ENCODE measurements at regions of chr13 and their contacts with region 1.

Region 1: GRCh38 chr13:99063952-99064351 is 86.1 kb upstream of the DOCK9 start:
- DNase-seq: no peak
- ATAC-seq: peak; percentile 52
- H3K4me3 Mint-ChIP-seq: no peak overlapping the region
- H3K27ac Mint-ChIP-seq: peak overlapping the region; percentile 47
- H3K4me1 Mint-ChIP-seq: peaks cover 50% of the 10 kb centered on the region
- H3K27me3 Mint-ChIP-seq: no peaks in the 10 kb centered on the region

Region 2: GRCh38 chr13:99053636-99054233 is 10.2 kb before region 1 on chr13:
- CTCF ChIA-PET with region 1: interaction called, 14 read pairs
- DNase-seq: peak; percentile 47
- ATAC-seq: peak; percentile 55
- H3K4me3 Mint-ChIP-seq: no peak overlapping the region
- H3K27ac Mint-ChIP-seq: peak overlapping the region; percentile 71
- H3K4me1 Mint-ChIP-seq: peaks cover 59% of the 10 kb centered on the region
- H3K27me3 Mint-ChIP-seq: no peaks in the 10 kb centered on the region

Region 3: DNA sequence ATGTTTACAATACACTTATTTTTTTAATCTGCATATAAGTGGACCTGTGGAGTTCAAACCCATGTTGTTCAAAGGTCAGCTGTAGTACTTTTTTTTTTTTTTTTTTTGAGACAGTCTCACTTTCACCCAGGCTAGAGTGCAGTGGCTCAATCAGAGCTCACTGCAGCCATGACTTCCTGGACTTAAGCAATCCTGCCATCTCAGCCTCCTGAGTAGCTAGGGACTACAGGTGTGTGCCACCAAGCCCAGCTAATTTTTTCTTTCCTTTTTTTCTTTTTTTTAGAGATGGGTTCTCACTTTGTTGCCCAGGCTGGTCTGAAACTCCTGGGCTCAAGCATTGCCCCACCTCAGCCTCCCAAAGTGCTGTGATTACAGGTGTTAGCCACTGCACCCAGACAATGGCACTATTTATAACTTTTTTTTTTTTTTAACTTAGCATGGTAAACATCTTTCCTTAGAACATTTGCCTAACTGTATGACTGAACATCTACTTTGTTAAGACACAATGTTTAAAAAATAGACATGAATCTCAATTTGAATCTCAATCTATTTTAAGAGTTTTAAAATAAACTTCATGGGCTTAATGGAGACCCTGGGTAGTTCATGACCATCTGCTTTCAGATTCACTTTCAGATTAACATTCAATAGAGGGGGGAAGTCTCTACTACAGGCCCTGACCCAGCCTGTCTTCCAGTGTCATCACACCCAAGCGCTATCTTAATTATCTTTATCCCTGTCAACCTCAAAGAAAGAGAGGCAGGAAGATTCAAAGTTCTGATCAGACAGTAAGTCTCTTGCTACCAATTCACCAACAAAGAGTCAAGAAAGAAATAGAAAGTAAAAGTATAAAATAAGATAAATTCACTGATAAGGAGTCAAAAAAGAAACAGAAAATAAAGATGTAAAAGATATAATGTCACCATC is 11.6 kb after region 1 on chr13:
- CTCF ChIA-PET with region 1: no interaction called
- DNase-seq: peak; percentile 52
- ATAC-seq: peak; percentile 91
- H3K4me3 Mint-ChIP-seq: peak overlapping the region; percentile 48
- H3K27ac Mint-ChIP-seq: peak overlapping the region; percentile 93
- H3K4me1 Mint-ChIP-seq: peaks cover 66% of the 10 kb centered on the region
- H3K27me3 Mint-ChIP-seq: no peaks in the 10 kb centered on the region

Region 4: DNA sequence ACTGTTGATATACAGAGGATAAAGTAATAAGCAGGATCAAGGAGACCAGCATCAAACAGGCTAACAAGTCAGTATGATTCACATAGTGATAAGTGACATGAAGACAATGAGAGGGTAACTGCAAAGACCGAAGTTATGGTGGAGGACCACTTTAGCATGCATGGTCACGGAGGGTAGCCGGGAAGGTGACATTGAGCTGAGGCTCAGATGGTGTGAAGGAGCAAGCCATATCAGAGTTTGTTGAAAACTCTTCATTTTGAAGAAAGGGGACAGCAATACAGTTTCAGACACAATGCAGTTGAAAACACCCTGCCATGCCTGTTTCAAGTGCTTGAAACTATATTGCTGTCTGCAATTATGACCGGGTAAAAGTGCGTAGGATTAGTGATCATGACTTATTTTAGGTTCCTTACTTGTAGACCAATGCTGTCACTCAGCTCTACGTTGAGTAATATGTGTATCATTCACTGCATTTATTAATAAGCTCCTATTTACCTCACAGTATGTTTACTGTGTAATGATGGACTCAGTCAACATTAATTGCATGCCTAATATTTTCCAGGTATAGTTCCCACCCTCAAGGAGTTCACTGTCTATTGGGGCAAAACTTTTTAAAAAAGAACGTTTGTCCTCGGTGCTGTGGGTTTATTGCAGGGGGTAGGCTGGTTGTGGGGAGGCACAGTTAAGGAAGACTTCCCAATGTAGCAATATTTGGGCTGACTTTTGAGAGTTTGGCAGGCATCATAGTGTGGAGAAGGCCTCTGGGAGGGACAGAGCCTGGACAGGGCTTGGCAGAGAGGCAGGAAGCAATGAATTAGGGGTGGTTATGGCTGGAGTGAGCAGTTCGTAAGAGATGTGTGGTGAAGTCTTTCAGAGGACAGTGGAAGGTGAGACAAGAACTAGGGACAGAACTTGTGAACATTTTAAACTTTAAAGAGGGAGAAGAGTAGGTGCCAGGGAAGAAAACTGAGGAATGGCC is 139.9 kb after region 1 on chr13:
- CTCF ChIA-PET with region 1: no interaction called
- DNase-seq: no peak
- ATAC-seq: no peak
- H3K4me3 Mint-ChIP-seq: peak overlapping the region; percentile 68
- H3K27ac Mint-ChIP-seq: peak overlapping the region; percentile 89
- H3K4me1 Mint-ChIP-seq: peaks cover 69% of the 10 kb centered on the region
- H3K27me3 Mint-ChIP-seq: no peaks in the 10 kb centered on the region

Measured in activated CD8-positive, alpha-beta memory T cell treated with anti-CD3 and anti-CD28 coated beads, Interleukin-2, amount 10 ng/mL, durations not matched to agents 7 days and 5 days (primary cell).